Breast epithelium (tissue), 4 donors: ENCODE measurements at regions of chr2 and their contacts with region 1.

Region 1: GRCh38 chr2:184543832-184544231 is 54.5 kb upstream of the ZNF804A start:
- DNase-seq: no peak
- H3K4me3 ChIP-seq: no peak overlapping the region
- H3K27ac ChIP-seq: no peak overlapping the region
- H3K4me1 ChIP-seq: no peaks in the 10 kb centered on the region
- H3K27me3 ChIP-seq: no peaks in the 10 kb centered on the region
- CTCF ChIP-seq: no peak
- POLR2A ChIP-seq: no peak

Region 2: GRCh38 chr2:185360776-185361175 is 816.9 kb after region 1 on chr2:
- intact Hi-C with region 1: loop called (anchors 5 kb)
- DNase-seq: no peak
- H3K4me3 ChIP-seq: no peak overlapping the region
- H3K27ac ChIP-seq: no peak overlapping the region
- H3K4me1 ChIP-seq: no peaks in the 10 kb centered on the region
- H3K27me3 ChIP-seq: no peaks in the 10 kb centered on the region
- CTCF ChIP-seq: no peak
- POLR2A ChIP-seq: no peak

Region 3: GRCh38 chr2:186274936-186275575 is 1731.2 kb after region 1 on chr2:
- intact Hi-C with region 1: no loop called
- DNase-seq: no peak
- H3K4me3 ChIP-seq: no peak overlapping the region
- H3K27ac ChIP-seq: no peak overlapping the region
- H3K4me1 ChIP-seq: no peaks in the 10 kb centered on the region
- H3K27me3 ChIP-seq: no peaks in the 10 kb centered on the region
- CTCF ChIP-seq: no peak
- POLR2A ChIP-seq: no peak